Breast epithelium (tissue), 4 donors: ENCODE measurements at regions of chr3 and their contacts with region 1.

Region 1: GRCh38 chr3:66609659-66610561 is 109.1 kb upstream of the LRIG1 start:
- DNase-seq: peak in 1 of 2 donors; percentile 60
- H3K4me3 ChIP-seq: no peak overlapping the region
- H3K27ac ChIP-seq: peak overlapping the region; percentile 36 to 70
- H3K4me1 ChIP-seq: no peaks in the 10 kb centered on the region
- H3K27me3 ChIP-seq: no peaks in the 10 kb centered on the region
- CTCF ChIP-seq: no peak
- POLR2A ChIP-seq: no peak

Region 2: DNA sequence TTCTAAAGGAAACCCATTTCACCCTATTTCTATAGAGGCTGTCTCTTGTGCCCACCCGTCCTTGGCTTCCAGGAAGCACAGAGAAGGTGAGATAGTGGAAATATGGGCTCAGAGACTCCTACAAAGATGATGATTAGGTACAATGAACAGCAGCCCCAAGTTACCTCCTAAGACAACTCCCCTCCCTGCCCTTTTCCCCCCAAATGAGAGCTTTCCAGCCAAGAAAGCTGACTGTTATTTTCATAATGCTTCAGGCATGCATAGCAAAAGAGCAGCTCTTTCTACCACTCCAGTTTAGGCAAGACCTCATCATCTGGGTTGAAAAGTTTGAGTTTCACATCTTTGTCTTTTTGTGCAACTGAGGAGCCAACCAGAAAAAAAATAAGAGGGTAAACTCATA is 1673.4 kb before region 1 on chr3:
- intact Hi-C with region 1: loop called (anchors 10 kb)
- DNase-seq: no peak
- H3K4me3 ChIP-seq: no peak overlapping the region
- H3K27ac ChIP-seq: peak overlapping the region in 1 of 2 donors; percentile 27
- H3K4me1 ChIP-seq: no peaks in the 10 kb centered on the region
- H3K27me3 ChIP-seq: no peaks in the 10 kb centered on the region
- CTCF ChIP-seq: no peak
- POLR2A ChIP-seq: no peak